PC-3 (cell line): ENCODE measurements at regions of chr17 and their contacts with region 1.

Region 1: GRCh38 chr17:4908301-4908700 is 5.4 kb upstream of the CHRNE start:
- DNase-seq: no peak
- ATAC-seq: no peak
- H3K4me3 ChIP-seq: no peak overlapping the region
- H3K27ac ChIP-seq: no peak overlapping the region
- H3K4me1 ChIP-seq: peaks cover 9% of the 10 kb centered on the region
- H3K27me3 ChIP-seq: no peaks in the 10 kb centered on the region
- CTCF ChIP-seq: no peak

Region 2: GRCh38 chr17:4777969-4778761 is 130.1 kb before region 1 on chr17:
- CTCF ChIA-PET with region 1: no interaction called
- POLR2A ChIA-PET with region 1: no interaction called
- intact Hi-C with region 1: no loop called
- DNase-seq: no peak
- ATAC-seq: no peak
- H3K4me3 ChIP-seq: no peak overlapping the region
- H3K27ac ChIP-seq: no peak overlapping the region
- H3K4me1 ChIP-seq: no peaks in the 10 kb centered on the region
- H3K27me3 ChIP-seq: no peaks in the 10 kb centered on the region
- CTCF ChIP-seq: no peak

Region 3: DNA sequence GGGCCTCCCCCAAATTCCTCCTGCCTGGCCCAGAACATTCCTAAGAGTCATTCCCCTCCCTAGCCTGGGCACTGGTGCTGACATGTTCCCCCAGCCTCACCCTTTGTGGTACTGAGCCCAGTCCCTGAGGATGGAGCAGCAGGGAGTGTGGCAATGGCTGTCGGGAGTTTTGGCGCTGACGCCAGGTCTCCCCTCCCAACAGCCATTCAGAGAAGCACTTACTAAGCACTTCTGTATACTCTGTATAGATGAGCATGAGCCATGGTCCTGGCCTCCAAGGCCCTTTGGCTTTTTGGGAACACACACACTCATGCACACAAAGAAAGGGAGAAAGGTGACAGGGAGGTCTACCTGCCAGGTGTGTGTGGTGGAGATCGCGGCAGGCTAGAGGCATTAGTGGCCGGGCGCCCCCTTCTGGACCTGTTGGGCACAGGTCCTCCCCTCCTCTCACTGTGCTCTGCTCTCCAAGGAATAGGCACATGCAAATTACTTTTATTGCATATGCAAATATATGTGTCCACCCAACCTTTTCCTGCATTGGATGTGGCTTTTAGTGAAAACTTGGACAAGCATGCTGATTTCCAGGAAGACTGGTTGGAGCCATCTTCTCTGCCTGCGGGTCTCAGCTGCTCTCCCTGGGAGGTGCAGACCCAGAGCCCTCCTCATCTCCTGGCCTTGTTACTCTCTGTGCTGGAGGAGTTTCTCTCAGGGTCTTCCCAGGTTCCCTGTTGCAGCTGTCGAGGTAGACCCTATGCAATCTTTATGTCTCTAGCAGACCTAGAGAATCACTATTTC is 26.3 kb before region 1 on chr17:
- CTCF ChIA-PET with region 1: no interaction called
- POLR2A ChIA-PET with region 1: no interaction called
- intact Hi-C with region 1: no loop called
- DNase-seq: peak; percentile 67
- ATAC-seq: peak; percentile 91
- H3K4me3 ChIP-seq: no peak overlapping the region
- H3K27ac ChIP-seq: no peak overlapping the region
- H3K4me1 ChIP-seq: no peaks in the 10 kb centered on the region
- H3K27me3 ChIP-seq: no peaks in the 10 kb centered on the region
- CTCF ChIP-seq: peak; percentile 88

Region 4: GRCh38 chr17:4939796-4940624 is 31.7 kb after region 1 on chr17 and contains the starts of genes RNF167 and SLC25A11:
- CTCF ChIA-PET with region 1: interaction called, 18 read pairs
- POLR2A ChIA-PET with region 1: interaction called, 3 read pairs
- intact Hi-C with region 1: loop called (anchors 5 kb)
- DNase-seq: peak; percentile 97
- ATAC-seq: peak; percentile 79
- H3K4me3 ChIP-seq: peak within 1 kb of the TSS; percentile 91
- H3K27ac ChIP-seq: peak within 1 kb of the TSS; percentile 87
- H3K4me1 ChIP-seq: peaks cover 26% of the 10 kb centered on the region
- H3K27me3 ChIP-seq: no peaks in the 10 kb centered on the region
- CTCF ChIP-seq: no peak
- total RNA-seq, gene RNF167: 37.8 and 43.1 TPM in 2 replicates
- total RNA-seq, gene SLC25A11: 64.3 and 72.1 TPM in 2 replicates

Region 5: DNA sequence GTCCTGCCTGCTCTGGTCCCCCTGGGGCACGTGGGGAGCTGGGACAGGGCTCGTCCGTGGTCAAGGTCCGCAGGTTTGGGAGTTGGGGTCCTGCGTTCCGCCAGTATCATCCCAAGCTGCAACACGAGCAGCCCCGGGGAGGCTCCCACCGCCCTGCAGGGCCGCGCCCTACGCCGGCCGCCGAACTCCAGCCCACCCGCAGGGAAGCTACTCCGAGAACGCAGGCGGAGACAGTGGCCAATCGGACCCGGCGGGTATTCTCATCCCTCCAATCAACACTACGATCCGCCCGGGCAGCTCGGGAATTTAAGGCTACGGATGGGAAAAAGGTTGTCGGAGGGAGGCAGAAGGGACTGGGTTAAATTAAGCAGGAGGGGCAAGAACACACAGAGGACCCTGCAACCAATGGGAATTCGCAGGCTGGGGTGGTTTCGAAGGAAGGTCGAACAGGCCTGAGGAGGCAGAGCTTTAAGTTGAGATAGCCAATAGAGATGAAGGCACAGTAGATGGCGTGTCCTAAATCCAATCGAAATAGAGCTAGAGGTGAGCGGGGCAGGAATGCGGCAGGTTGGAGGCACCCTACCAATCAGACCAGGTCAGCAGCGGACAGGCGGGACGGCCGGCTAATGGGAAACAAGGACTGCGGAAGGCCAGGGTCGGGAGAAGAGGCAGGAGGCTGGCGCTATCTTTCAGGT is 58.7 kb after region 1 on chr17:
- CTCF ChIA-PET with region 1: interaction called, 11 read pairs
- POLR2A ChIA-PET with region 1: interaction called, 5 read pairs
- intact Hi-C with region 1: loop called (anchors 1 kb)
- DNase-seq: peak; percentile 96
- ATAC-seq: peak; percentile 88
- H3K4me3 ChIP-seq: peak overlapping the region; percentile 79
- H3K27ac ChIP-seq: peak overlapping the region; percentile 92
- H3K4me1 ChIP-seq: peaks cover 23% of the 10 kb centered on the region
- H3K27me3 ChIP-seq: no peaks in the 10 kb centered on the region
- CTCF ChIP-seq: no peak

Region 6: DNA sequence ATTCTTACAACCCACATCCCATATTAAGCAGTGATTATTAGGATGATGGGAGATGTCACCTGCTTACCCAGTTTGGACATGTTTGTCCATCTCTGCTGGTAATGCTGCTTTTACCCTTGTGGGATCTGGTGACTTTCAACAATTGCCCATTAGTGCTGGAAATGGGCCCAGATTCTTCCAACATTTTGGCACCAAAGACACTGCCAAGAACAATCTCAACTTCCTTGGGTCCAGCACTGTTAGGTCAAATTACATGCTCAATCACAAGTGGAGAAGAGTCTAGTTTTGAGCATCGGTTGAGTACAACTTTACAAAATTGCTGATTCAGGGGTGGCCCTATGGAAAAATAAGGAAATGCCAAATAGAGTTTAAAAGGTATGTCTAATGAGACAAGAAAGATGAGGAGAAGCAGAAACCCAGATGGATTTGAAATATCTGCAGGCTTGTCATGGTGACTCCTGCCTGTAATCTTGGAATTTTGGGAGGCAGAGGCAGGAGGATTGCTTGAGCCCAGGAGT is 157.0 kb after region 1 on chr17:
- CTCF ChIA-PET with region 1: interaction called, 4 read pairs
- POLR2A ChIA-PET with region 1: no interaction called
- intact Hi-C with region 1: loop called (anchors 1 kb)
- DNase-seq: no peak
- ATAC-seq: no peak
- H3K4me3 ChIP-seq: no peak overlapping the region
- H3K27ac ChIP-seq: no peak overlapping the region
- H3K4me1 ChIP-seq: no peaks in the 10 kb centered on the region
- H3K27me3 ChIP-seq: no peaks in the 10 kb centered on the region
- CTCF ChIP-seq: no peak